H1 (cell line): ENCODE measurements at regions of chr2 and their contacts with region 1.

Region 1: DNA sequence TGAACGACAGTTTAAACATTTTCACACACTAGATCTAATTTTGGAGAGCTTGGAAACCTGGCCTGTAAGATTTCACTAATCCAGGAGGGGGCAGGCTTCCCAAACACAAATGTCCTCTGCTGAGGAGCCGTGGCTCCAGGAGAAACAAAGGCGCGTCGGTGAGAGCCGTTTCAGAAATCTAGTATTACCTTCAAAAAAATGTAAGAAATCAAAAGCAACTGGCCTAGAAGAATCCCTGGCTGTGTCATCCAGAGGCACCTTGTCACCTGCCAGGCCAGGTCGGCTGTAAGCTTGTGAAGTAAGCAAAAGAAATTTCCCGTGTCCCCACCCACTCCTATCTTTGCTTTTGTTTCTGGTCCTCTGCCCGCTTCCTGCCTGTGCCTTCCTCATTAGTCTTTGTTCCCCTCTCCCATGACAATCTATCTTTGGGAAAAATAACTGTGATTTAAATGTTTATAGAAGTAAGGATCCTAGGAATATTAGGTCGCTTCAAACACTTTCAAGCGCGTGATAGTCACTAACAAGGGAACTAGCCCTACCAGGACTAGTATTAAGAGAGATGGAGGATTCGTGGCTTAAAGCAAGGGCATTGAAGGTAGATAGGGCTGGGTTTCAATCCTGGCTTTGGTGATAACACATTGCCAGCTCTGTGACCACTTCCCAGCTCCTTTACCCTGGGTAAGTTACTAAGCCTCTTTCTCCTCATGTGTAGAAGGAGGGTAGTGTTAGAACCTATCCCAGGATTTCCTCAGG is 99.5 kb upstream of the STK39 start:
- DNase-seq: peak; percentile 33 to 83
- H3K4me3 ChIP-seq: peak overlapping the region; percentile 28 to 57 (median 39); a peak in 6 of 8 replicates
- H3K27ac ChIP-seq: no peak overlapping the region; the same call in 1 of the 2 replicates
- H3K4me1 ChIP-seq: peaks cover 0 to 6% (median 1%) of the 10 kb centered on the region in 4 experiments; a peak in 3 of 7 replicates
- H3K27me3 ChIP-seq: no peaks in the 10 kb centered on the region
- CTCF ChIP-seq: peak; percentile 20 to 75 (median 67)
- EP300 ChIP-seq: no peak
- POLR2A ChIP-seq: 0 out of 3 replicates have a peak, but pooled peaks of 1 of the 2 experiments have one; percentile 26
- RAD21 ChIP-seq: peak; percentile 93

Region 2: GRCh38 chr2:168116448-168116847 is 230.5 kb before region 1 on chr2:
- CTCF ChIA-PET with region 1: no interaction called
- POLR2A ChIA-PET with region 1: no interaction called
- DNase-seq: no peak
- H3K4me3 ChIP-seq: no peak overlapping the region
- H3K27ac ChIP-seq: no peak overlapping the region
- H3K4me1 ChIP-seq: peaks cover 0 to 13% (median 7%) of the 10 kb centered on the region in 4 experiments; a peak in 4 of 7 replicates
- H3K27me3 ChIP-seq: no peaks in the 10 kb centered on the region
- CTCF ChIP-seq: peak in 2 of 3 experiments; percentile 18 to 32; a peak in 1 of 4 replicates
- EP300 ChIP-seq: no peak
- POLR2A ChIP-seq: no peak
- RAD21 ChIP-seq: peak in 1 of 2 experiments; percentile 43; a peak in 3 of 4 replicates

Region 3: DNA sequence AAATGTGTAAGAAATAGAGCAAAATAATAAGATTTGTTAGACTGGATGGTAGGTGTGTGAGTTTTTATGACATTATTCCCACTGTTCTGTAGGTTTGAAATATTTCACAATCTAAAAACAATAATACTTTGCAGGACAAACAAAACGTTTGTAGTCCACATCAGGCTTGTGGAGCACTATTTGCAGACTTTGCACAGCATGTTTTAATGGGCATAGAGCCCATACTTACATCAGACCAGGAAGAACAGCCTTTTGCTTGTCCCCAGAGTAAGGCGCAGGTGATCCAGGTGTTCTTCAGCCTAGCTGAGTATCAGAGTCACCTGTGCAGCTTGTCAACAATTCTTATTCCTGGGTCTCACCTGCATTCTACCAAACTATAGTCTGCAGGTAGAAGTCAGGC is 90.5 kb before region 1 on chr2:
- CTCF ChIA-PET with region 1: no interaction called
- POLR2A ChIA-PET with region 1: no interaction called
- DNase-seq: no peak
- H3K4me3 ChIP-seq: no peak overlapping the region
- H3K27ac ChIP-seq: no peak overlapping the region
- H3K4me1 ChIP-seq: no peaks in the 10 kb centered on the region
- H3K27me3 ChIP-seq: no peaks in the 10 kb centered on the region
- CTCF ChIP-seq: no peak
- EP300 ChIP-seq: no peak
- POLR2A ChIP-seq: no peak
- RAD21 ChIP-seq: no peak

Region 4: DNA sequence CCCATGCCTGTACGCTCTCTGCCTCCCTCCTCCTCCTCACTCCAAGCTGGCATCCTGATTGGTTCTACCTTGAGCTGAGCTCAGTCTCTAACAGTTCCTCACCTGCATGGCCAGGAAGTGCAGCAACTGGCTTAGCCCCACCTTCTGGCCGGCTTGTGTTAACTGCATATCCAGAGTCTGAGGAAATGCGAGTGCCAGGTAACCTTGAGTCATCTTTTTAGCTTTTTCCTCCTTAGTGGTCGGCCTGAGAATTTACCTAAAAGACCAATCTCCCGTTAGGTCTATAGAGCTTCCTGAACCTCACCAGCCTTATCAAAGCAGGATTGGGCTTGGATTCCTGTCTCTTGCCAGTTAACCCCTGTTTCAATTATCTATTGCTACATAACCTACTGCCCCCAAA is 10.0 kb before region 1 on chr2:
- CTCF ChIA-PET with region 1: interaction called, 15 read pairs
- POLR2A ChIA-PET with region 1: interaction called, 6 read pairs
- DNase-seq: peak; percentile 60 to 67
- H3K4me3 ChIP-seq: no peak overlapping the region
- H3K27ac ChIP-seq: no peak overlapping the region
- H3K4me1 ChIP-seq: peaks cover 0 to 18% (median 3%) of the 10 kb centered on the region in 4 experiments; a peak in 3 of 7 replicates
- H3K27me3 ChIP-seq: no peaks in the 10 kb centered on the region
- CTCF ChIP-seq: peak; percentile 72 to 96 (median 84)
- EP300 ChIP-seq: no peak
- POLR2A ChIP-seq: no peak
- RAD21 ChIP-seq: peak; percentile 75 to 80

Region 5: DNA sequence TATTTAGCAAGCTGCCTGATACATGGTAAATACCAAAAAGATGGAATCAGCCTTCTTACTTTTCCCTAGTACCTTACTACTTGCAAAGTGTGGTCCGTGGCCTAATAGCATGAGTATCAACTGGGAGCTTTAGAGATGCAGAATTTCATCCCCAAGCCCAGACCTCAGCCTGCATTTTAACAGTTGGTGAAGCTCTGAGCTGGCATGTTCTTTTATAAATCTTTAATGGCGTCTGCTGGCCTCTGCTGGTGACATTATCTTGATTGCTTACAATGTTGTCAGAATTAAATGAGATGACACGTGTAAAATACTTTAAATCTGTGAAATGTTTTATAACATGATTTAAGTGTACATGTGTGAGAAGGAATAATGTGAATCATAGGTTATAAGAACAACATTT is 340.4 kb after region 1 on chr2:
- CTCF ChIA-PET with region 1: interaction called, 33 read pairs
- POLR2A ChIA-PET with region 1: no interaction called
- DNase-seq: no peak
- H3K4me3 ChIP-seq: no peak overlapping the region
- H3K27ac ChIP-seq: no peak overlapping the region
- H3K4me1 ChIP-seq: peaks cover 0 to 5% (median 0%) of the 10 kb centered on the region in 4 experiments; a peak in 2 of 7 replicates
- H3K27me3 ChIP-seq: no peaks in the 10 kb centered on the region
- CTCF ChIP-seq: peak in 2 of 3 experiments; percentile 30 to 40; a peak in 2 of 4 replicates
- EP300 ChIP-seq: no peak
- POLR2A ChIP-seq: no peak
- RAD21 ChIP-seq: peak; percentile 63 to 67

Region 6: GRCh38 chr2:168742258-168742932 is 395.5 kb after region 1 on chr2:
- CTCF ChIA-PET with region 1: interaction called, 10 read pairs
- POLR2A ChIA-PET with region 1: no interaction called
- DNase-seq: no peak
- H3K4me3 ChIP-seq: no peak overlapping the region
- H3K27ac ChIP-seq: no peak overlapping the region
- H3K4me1 ChIP-seq: no peaks in the 10 kb centered on the region
- H3K27me3 ChIP-seq: no peaks in the 10 kb centered on the region
- CTCF ChIP-seq: no peak
- EP300 ChIP-seq: no peak
- POLR2A ChIP-seq: no peak
- RAD21 ChIP-seq: no peak

Region 7: DNA sequence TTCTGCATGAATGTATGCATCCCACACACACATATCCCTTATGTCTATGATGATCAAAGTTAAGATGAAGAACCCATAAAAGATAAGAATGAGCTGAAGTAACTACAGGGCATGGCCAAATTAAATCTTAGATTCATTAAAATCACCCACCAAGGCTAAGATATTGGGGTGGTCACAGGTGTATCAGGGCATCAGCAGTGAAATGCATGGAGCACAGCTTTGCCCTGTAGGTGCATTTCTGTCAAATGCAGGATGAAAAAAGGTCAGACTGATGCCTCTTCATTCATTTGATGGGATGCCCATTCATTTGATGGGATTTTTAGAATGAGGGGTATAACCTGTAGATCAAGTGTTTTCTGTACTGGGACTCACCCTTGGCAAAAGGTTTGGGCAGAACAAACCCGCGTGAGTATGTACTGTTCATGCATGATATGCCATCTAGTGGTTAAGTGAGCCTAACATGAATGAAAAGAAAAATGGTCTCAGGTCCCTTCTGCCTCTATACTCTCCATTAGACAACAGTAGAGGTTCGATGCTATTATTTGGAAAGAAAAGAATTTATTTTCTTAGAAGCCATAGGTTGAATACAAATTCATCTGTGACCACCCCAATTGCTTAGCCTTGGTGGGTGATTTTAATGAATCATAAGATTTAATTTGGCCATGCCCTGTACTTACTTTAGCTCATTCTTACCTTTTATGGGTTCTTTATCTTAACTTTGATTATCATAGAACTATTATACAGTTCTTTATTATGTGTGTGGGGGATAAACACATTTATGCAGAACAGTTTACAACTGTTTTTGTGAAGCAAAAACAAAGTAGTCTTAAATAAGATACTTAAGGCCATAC is 412.3 kb after region 1 on chr2:
- CTCF ChIA-PET with region 1: interaction called, 22 read pairs
- POLR2A ChIA-PET with region 1: no interaction called
- DNase-seq: no peak
- H3K4me3 ChIP-seq: no peak overlapping the region
- H3K27ac ChIP-seq: no peak overlapping the region
- H3K4me1 ChIP-seq: no peaks in the 10 kb centered on the region; a peak in 1 of 7 replicates
- H3K27me3 ChIP-seq: no peaks in the 10 kb centered on the region; a peak in 1 of 7 replicates
- CTCF ChIP-seq: peak in 2 of 3 experiments; percentile 43 to 58; a peak in 3 of 4 replicates
- EP300 ChIP-seq: no peak
- POLR2A ChIP-seq: no peak
- RAD21 ChIP-seq: peak; percentile 79